Activated CD4-positive, alpha-beta T cell treated with anti-CD3 and anti-CD28 coated beads for 36 hours (primary cell): ENCODE measurements at regions of chr10 and their contacts with region 1.

Region 1: GRCh38 chr10:119650692-119651513 is at the start of gene BAG3:
- DNase-seq: peak; percentile 91
- ATAC-seq: peak; percentile 48
- H3K4me3 Mint-ChIP-seq: peak within 1 kb of the TSS; percentile 84
- H3K27ac Mint-ChIP-seq: peak within 1 kb of the TSS; percentile 95
- H3K4me1 Mint-ChIP-seq: peaks cover 39% of the 10 kb centered on the region
- H3K27me3 Mint-ChIP-seq: no peaks in the 10 kb centered on the region
- total RNA-seq, gene BAG3: 23.8 to 30.7 TPM

Region 2: GRCh38 chr10:119139464-119140067 is 511.3 kb before region 1 on chr10:
- CTCF ChIA-PET with region 1: no interaction called
- POLR2A ChIA-PET with region 1: no interaction called
- intact Hi-C with region 1: loop called in 1 of 2 experiments (anchors 10 kb)
- DNase-seq: peak; percentile 73
- ATAC-seq: peak; percentile 76
- H3K4me3 Mint-ChIP-seq: no peak overlapping the region
- H3K27ac Mint-ChIP-seq: peak overlapping the region; percentile 14
- H3K4me1 Mint-ChIP-seq: peaks cover 14% of the 10 kb centered on the region
- H3K27me3 Mint-ChIP-seq: no peaks in the 10 kb centered on the region

Region 3: DNA sequence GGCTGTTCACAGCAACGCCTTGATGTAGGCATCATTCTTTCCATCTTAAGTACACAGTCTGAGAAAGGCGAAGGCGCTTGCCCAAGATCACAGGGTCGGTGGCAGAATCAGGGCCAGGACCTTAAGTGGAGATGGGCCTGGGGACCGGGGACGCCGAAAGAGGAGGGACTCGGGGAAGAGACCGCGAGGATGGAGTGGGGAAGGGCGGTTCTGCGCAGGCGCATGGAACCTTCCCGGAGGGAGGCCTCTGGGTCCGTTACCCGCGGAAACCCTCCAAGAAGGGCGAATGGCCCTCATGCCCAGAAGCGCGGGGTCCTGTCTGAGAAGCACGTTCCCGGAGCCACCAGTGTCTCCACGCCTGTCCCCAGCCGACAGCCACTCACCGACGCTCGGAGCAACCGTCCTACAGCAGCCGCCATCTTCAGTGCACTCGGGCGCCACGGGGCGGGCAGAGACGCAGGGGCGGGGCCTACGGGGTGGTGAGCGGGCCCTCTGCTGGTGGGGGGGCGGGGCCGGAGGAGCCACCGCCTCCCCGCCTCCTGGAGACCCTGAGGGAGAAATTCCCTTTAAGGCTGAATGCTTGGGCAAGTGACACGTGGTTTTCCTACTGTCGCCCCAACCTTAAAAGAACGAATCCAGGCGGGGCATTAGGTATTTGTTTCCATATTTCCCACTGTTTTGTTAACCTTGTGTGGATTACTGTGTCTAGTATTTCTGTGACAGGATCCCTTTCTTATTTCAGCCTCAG is 472.4 kb before region 1 on chr10 and contains the start of gene PRDX3:
- CTCF ChIA-PET with region 1: no interaction called
- POLR2A ChIA-PET with region 1: no interaction called
- intact Hi-C with region 1: loop called in 1 of 2 experiments (anchors 5 kb)
- DNase-seq: peak; percentile 98
- ATAC-seq: peak; percentile 95
- H3K4me3 Mint-ChIP-seq: peak within 1 kb of the TSS; percentile 88
- H3K27ac Mint-ChIP-seq: peak within 1 kb of the TSS; percentile 95
- H3K4me1 Mint-ChIP-seq: peaks cover 36% of the 10 kb centered on the region
- H3K27me3 Mint-ChIP-seq: no peaks in the 10 kb centered on the region
- total RNA-seq, gene PRDX3: 160 to 217 TPM

Region 4: GRCh38 chr10:119596537-119597404 is 54.1 kb before region 1 on chr10 and contains the start of gene TIAL1:
- CTCF ChIA-PET with region 1: interaction called, 3 read pairs
- POLR2A ChIA-PET with region 1: no interaction called
- intact Hi-C with region 1: loop called (anchors 1 kb)
- DNase-seq: peak; percentile 96
- ATAC-seq: peak; percentile 90
- H3K4me3 Mint-ChIP-seq: peak within 1 kb of the TSS; percentile 92
- H3K27ac Mint-ChIP-seq: peak within 1 kb of the TSS; percentile 93
- H3K4me1 Mint-ChIP-seq: peaks cover 49% of the 10 kb centered on the region
- H3K27me3 Mint-ChIP-seq: no peaks in the 10 kb centered on the region
- total RNA-seq, gene TIAL1: 187 to 197 TPM

Region 5: GRCh38 chr10:119725828-119726675 is 75.1 kb after region 1 on chr10 and contains the start of gene INPP5F:
- CTCF ChIA-PET with region 1: interaction called, 3 read pairs
- POLR2A ChIA-PET with region 1: interaction called, 5 read pairs
- intact Hi-C with region 1: loop called (anchors 1 to 2 kb)
- DNase-seq: peak; percentile 100
- ATAC-seq: peak; percentile 95
- H3K4me3 Mint-ChIP-seq: peak within 1 kb of the TSS; percentile 86
- H3K27ac Mint-ChIP-seq: peak within 1 kb of the TSS; percentile 73
- H3K4me1 Mint-ChIP-seq: peaks cover 47% of the 10 kb centered on the region
- H3K27me3 Mint-ChIP-seq: no peaks in the 10 kb centered on the region
- total RNA-seq, gene INPP5F: 10.9 to 12.6 TPM

Region 6: DNA sequence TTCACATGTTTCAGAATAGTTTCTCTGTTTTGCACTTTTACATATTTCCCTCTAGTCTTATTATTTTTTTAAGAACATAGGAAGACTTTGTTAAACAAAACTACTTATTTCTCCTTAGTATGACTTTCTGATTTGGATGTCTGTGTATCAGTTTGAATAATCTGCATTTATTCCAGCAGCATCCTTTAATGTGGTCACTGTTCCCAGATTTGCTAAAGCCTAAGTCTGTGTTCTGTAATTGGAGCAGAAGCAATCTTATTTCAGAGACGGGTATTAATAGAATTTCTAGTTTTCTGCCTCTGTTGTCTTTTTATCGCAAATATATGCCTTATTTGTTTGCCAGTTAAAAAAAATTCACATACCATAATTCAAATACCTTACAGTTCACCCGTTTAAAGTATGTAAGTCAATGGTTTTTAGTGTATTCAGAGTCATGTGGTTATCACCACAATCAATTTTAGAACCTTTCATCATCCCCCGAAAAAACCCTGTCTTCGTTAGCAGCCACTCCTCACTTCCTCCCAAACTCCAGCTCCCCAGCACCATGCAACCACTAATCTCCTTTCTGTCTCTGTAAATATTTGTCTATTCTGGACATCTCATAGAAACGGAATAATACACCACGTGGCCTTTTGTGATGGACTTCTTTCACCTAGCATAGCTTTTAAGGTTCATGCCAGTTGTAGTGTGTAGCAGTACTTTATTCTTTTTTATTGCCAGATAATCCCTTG is 133.6 kb after region 1 on chr10:
- CTCF ChIA-PET with region 1: no interaction called
- POLR2A ChIA-PET with region 1: no interaction called
- intact Hi-C with region 1: no loop called
- DNase-seq: peak; percentile 11
- ATAC-seq: peak; percentile 79
- H3K4me3 Mint-ChIP-seq: no peak overlapping the region
- H3K27ac Mint-ChIP-seq: peak overlapping the region; percentile 1
- H3K4me1 Mint-ChIP-seq: peaks cover 30% of the 10 kb centered on the region
- H3K27me3 Mint-ChIP-seq: no peaks in the 10 kb centered on the region